ENCODE measurements at regions of chr2 and their contacts with region 1.

Region 1: DNA sequence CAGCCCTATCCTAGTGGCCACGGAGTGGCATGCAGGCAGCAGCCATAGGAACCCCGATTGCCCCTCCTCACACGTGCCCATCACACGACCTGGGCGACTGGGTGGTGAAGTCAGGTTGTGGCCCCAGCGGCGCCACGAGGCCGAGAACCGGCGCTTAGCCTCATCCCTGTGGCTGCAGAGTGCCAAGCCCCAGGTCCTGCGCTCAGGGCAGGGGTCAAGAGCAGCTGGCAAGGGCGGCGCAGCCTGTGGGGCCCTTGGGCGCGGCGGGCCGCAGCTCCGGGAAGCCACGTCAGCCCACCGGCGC is 73.3 kb downstream of the RPIA start:
- DNase-seq: no peak
- H3K4me3 ChIP-seq: no peak overlapping the region
- H3K27ac ChIP-seq: no peak overlapping the region
- H3K4me1 ChIP-seq: peaks cover 8% of the 10 kb centered on the region
- H3K27me3 ChIP-seq: peaks cover 2 to 11% of the 10 kb centered on the region in 2 experiments
- CTCF ChIP-seq: no peak
- POLR2A ChIP-seq: no peak

Region 2: DNA sequence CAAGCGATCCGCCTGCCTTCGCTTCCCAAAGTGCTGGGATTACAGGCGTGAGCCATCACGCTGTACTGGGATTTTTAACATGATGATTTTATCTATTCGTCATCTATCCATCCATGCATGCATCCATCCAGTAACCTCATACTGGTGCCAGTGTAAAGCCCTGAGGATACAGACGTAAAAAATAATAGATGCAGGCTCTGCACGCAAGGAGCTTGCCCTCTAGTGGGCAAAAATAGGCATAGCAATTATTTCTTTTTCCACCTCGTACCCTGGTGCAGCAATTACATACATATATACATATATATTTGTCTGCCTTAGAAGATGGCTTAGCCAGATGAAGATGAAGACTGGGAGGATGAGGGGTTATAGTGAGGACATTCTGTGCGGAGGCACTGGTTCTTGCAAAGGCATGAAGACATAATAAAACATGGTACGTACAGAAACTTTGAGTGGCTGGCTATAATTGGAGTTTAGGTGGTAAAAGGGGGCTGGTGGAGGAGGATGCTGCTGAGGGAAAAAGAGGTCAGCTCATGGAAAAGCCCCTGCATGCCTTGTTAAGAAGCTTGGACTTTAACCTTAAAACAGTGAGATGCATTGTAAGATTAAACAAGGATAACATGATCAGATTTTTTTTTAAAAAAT is 92.9 kb before region 1 on chr2:
- CTCF ChIA-PET with region 1: no interaction called
- POLR2A ChIA-PET with region 1: no interaction called
- dilution Hi-C with region 1: no loop called
- intact Hi-C with region 1: no loop called
- DNase-seq: peak; percentile 69
- H3K4me3 ChIP-seq: no peak overlapping the region
- H3K27ac ChIP-seq: no peak overlapping the region
- H3K4me1 ChIP-seq: no peaks in the 10 kb centered on the region
- H3K27me3 ChIP-seq: peaks cover 5 to 8% of the 10 kb centered on the region in 2 experiments
- CTCF ChIP-seq: peak; percentile 74 to 77
- POLR2A ChIP-seq: no peak

Region 3: DNA sequence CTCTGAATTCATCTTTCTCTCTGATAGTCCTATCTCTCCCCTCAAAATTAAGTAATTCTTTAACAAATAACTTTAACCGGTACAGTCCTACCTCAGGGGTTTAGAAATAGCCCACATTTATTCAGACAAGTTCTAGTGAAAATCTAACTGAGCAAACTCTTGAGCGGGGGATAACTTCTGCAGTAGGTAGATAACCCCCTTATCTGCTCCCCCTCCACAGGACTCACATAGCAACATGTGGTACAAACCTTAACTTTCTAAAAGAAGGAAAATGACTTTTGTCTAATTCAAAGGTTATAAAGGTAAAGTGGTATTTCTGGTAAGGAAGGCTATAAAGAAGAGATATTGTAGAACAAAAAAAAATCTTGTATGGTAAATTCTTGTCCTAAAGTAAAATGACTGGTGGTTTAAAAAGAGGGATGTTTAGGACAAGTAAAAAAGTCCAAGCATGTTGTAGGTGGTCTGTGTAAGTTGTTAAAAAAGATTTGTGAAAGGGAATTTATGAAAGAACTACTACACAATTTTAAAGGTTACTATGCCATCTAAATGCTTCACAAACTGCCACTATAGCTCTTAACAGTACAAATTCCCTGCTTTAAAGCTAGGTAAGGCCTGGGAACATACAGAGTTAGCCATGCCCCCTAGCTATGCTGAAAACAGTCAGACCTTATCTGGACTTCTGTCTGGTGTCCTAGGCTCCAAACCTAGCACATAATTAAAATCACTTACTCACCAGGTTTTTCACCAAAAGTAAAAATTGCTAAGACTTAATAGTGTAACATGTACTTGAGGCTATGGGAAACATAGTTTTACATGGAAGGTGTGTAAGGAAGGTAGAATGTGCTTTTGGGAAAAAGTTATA is 81.4 kb before region 1 on chr2:
- CTCF ChIA-PET with region 1: no interaction called
- POLR2A ChIA-PET with region 1: no interaction called
- dilution Hi-C with region 1: no loop called
- intact Hi-C with region 1: no loop called
- DNase-seq: no peak
- H3K4me3 ChIP-seq: no peak overlapping the region
- H3K27ac ChIP-seq: no peak overlapping the region
- H3K4me1 ChIP-seq: no peaks in the 10 kb centered on the region
- H3K27me3 ChIP-seq: peaks cover 0 to 3% of the 10 kb centered on the region in 2 experiments
- CTCF ChIP-seq: no peak
- POLR2A ChIP-seq: no peak

Region 4: DNA sequence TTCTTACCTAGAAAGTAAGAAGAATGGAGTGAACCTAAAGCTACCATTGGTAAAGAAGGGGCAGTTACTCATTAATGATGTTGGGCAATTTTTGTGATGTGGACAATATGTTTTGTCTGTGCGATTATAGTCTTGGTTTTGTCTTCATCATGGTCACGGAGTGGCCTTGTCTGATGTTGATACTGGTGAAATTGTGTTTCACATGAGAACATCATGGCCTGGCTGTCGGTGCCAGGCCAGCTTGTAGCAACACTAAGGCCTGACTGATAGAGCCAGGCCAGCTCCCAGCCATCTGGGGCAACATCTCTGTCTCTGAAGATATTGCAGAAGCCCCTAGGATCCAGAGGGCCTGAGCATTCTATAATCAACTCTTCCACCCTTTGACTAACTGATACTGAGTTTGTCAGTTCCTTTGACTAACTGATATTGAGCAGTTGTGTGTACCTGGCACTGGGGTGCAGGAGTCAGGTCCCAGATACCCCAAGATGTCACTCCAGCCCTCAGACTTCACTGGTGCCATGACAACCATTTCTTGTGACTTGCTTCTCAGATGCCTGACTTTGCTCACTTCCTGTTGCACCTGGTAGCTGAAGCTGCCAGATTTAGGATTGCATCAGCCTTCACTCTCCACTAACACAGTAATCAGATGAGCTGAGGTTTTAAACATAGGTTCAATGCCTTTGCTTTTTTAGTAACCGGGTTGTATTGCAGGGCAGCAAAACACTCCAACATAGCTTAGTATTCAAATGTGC is 10.8 kb before region 1 on chr2:
- CTCF ChIA-PET with region 1: interaction called, 11 read pairs
- POLR2A ChIA-PET with region 1: no interaction called
- dilution Hi-C with region 1: no loop called
- intact Hi-C with region 1: no loop called
- DNase-seq: peak; percentile 22
- H3K4me3 ChIP-seq: no peak overlapping the region
- H3K27ac ChIP-seq: no peak overlapping the region
- H3K4me1 ChIP-seq: no peaks in the 10 kb centered on the region
- H3K27me3 ChIP-seq: no peaks in the 10 kb centered on the region
- CTCF ChIP-seq: no peak
- POLR2A ChIP-seq: no peak

Region 5: GRCh38 chr2:88813612-88814011 is 48.8 kb after region 1 on chr2:
- CTCF ChIA-PET with region 1: no interaction called
- POLR2A ChIA-PET with region 1: no interaction called
- dilution Hi-C with region 1: no loop called
- intact Hi-C with region 1: no loop called
- DNase-seq: peak; percentile 44
- H3K4me3 ChIP-seq: no peak overlapping the region
- H3K27ac ChIP-seq: no peak overlapping the region
- H3K4me1 ChIP-seq: peaks cover 8% of the 10 kb centered on the region
- H3K27me3 ChIP-seq: peaks cover 0 to 2% of the 10 kb centered on the region in 2 experiments
- CTCF ChIP-seq: peak; percentile 43 to 54
- POLR2A ChIP-seq: no peak

Measured in endothelial cell of umbilical vein (primary cell).